ENCODE measurements at regions of chr15 and their contacts with region 1.

Region 1: GRCh38 chr15:63504247-63504978 is at the start of gene USP3:
- DNase-seq: peak; percentile 98
- H3K4me3 Mint-ChIP-seq: peak within 1 kb of the TSS; percentile 97
- H3K27ac Mint-ChIP-seq: peak within 1 kb of the TSS; percentile 97
- H3K4me1 Mint-ChIP-seq: peaks cover 71% of the 10 kb centered on the region
- H3K27me3 Mint-ChIP-seq: no peaks in the 10 kb centered on the region
- total RNA-seq, gene USP3: 46.7 and 49.2 TPM in 2 replicates

Region 2: DNA sequence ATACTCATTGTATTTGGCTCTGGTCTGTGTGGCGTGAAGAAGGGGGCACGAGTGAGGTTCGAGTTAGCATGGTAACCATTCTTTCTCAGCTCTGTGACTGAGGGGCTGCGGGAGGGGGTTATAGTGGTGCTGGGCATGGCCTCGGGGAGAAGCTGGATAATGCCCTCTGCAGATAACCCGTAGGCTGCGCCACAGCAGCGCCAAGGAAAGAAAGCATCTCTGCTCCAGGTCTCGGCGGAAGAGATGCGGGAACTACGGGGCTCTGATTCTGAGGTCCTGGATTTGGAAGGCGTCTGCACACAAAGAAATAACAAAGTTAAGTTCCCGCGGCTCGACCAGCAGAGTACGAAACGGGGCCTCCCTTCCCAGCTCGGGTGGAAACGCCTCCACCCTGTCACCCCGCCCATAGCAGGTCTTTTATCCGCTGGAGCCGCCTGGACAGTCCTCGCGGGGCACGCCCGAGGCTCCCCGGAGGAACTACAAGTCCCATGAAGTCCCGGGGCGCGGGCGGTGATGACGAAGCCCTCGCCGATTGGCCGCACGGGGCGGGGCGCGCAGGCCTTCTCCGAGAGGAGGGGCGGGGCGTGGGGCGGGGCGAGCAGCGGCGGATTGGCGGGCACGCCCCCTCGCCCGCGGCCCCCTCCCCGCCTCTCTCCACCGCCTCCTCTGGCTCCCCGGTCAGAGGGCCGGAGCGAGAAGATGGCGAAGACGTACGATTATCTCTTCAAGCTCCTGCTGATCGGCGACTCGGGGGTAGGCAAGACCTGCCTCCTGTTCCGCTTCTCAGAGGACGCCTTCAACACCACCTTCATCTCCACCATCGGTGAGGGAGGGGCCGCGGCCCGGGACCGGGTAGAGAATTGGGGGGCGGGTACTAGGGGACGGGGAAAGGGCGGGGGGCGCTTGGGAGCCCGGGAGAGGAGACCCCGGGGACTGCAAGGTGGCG is 315.2 kb before region 1 on chr15 and contains the start of gene RAB8B:
- intact Hi-C with region 1: loop called (anchors 5 kb)
- DNase-seq: peak; percentile 99
- H3K4me3 Mint-ChIP-seq: peak within 1 kb of the TSS; percentile 92
- H3K27ac Mint-ChIP-seq: peak within 1 kb of the TSS; percentile 92
- H3K4me1 Mint-ChIP-seq: peaks cover 39% of the 10 kb centered on the region
- H3K27me3 Mint-ChIP-seq: peaks cover 6% of the 10 kb centered on the region
- total RNA-seq, gene RAB8B: 186 and 187 TPM in 2 replicates

Region 3: GRCh38 chr15:63436872-63437375 is 67.5 kb before region 1 on chr15:
- intact Hi-C with region 1: no loop called
- DNase-seq: peak; percentile 92
- H3K4me3 Mint-ChIP-seq: peak overlapping the region; percentile 49
- H3K27ac Mint-ChIP-seq: peak overlapping the region; percentile 79
- H3K4me1 Mint-ChIP-seq: peaks cover 25% of the 10 kb centered on the region
- H3K27me3 Mint-ChIP-seq: no peaks in the 10 kb centered on the region

Region 4: DNA sequence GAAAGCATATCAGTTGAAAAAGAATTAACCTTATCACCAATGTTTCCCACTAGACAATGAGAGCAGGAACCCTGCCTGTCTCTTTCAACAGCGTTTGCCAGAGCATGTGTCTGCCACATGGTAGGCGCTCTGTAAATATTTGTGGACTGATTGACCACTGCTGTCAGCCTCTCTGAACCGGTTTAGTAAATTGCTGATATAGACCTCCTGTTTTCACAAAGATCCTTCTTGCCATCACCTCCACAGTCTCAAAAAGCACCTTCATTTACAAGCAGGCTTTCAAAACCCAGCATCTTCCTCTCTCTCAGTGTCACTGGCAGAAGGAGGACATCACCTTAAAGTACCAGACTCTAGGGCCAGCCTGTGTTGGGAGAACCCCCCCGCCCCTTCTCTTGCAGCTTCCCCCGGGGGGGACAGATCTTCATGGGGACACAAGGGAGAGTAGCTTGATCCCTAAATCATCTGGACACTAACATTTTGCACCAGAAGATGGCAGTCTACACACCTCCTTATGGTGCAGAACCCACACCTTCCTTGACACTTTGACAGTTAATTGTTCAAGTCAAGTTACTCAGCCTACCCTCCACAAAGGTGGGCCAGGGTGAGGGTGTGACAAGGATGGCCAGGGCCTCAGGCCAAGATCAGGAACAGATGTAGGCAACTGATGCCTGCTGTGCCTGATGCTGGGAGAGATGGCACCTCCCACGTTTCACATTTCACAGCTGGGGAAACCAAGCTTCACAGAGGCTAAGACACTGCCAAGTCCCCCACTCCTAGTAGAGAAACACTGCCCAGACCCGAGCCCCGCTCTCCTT is 37.8 kb before region 1 on chr15:
- intact Hi-C with region 1: loop called (anchors 2 kb)
- DNase-seq: peak; percentile 91
- H3K4me3 Mint-ChIP-seq: no peak overlapping the region
- H3K27ac Mint-ChIP-seq: no peak overlapping the region
- H3K4me1 Mint-ChIP-seq: peaks cover 23% of the 10 kb centered on the region
- H3K27me3 Mint-ChIP-seq: peaks cover 13% of the 10 kb centered on the region

Region 5: DNA sequence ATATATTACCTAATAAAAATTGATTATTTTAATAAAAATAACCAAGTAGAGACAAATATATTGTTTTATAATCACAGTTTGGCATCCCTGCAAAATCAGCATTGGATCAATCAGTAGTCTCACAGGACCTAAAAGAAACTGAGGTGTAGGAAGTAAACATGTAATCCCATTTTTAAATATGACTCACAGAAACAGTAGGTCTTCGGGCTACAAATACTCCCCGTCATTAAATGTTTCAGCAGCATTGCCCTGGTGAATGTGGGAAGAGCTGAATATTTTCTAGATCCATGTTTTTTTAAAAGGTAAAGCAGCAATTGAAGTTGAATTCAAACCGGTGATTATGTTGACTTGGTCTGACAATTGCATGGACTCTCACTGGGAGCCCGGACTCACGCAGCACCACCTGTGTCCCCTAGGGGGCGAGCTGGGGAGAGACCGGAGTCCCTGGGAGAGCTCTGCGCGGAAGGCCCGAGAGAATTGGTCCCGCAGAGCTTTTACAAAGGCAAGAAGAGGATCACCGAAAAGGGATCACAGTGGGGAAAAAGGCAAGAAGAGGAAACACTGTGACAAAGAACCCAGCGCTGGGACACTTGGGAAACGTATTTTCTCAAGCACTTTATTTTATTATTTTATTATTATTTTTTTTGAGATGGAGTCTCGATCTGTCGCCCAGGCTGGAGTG is 17.2 kb before region 1 on chr15:
- intact Hi-C with region 1: loop called (anchors 1 kb)
- DNase-seq: peak; percentile 97
- H3K4me3 Mint-ChIP-seq: peak overlapping the region; percentile 63
- H3K27ac Mint-ChIP-seq: peak overlapping the region; percentile 80
- H3K4me1 Mint-ChIP-seq: peaks cover 47% of the 10 kb centered on the region
- H3K27me3 Mint-ChIP-seq: no peaks in the 10 kb centered on the region

Region 6: GRCh38 chr15:63545520-63545919 is 41.1 kb after region 1 on chr15:
- intact Hi-C with region 1: no loop called
- DNase-seq: no peak
- H3K4me3 Mint-ChIP-seq: no peak overlapping the region
- H3K27ac Mint-ChIP-seq: no peak overlapping the region
- H3K4me1 Mint-ChIP-seq: peaks cover 14% of the 10 kb centered on the region
- H3K27me3 Mint-ChIP-seq: no peaks in the 10 kb centered on the region

Region 7: DNA sequence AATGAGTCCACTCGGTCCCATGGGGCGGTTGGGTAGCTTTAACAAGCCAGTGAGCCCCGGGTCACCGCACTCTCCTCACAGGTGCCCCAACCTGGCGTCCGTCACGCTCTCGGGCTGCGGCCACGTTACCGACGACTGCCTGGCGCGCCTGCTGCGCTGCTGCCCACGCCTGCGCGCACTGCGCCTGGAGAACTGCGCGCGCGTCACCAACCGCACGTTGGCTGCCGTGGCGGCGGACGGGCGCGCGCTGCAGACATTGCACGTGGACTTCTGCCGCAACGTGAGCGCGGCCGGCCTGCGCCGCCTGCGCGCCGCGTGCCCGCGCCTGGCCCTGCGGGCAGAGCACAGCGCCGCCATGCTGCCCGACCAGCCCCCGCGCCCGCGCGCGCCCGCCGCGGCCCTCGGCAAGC is 96.2 kb after region 1 on chr15:
- intact Hi-C with region 1: loop called (anchors 1 kb)
- DNase-seq: peak; percentile 97
- H3K4me3 Mint-ChIP-seq: peak overlapping the region; percentile 93
- H3K27ac Mint-ChIP-seq: peak overlapping the region; percentile 91
- H3K4me1 Mint-ChIP-seq: peaks cover 49% of the 10 kb centered on the region
- H3K27me3 Mint-ChIP-seq: no peaks in the 10 kb centered on the region

Region 8: GRCh38 chr15:63752075-63752684 is 247.8 kb after region 1 on chr15:
- intact Hi-C with region 1: no loop called
- DNase-seq: peak; percentile 85
- H3K4me3 Mint-ChIP-seq: no peak overlapping the region
- H3K27ac Mint-ChIP-seq: peak overlapping the region; percentile 44
- H3K4me1 Mint-ChIP-seq: peaks cover 8% of the 10 kb centered on the region
- H3K27me3 Mint-ChIP-seq: no peaks in the 10 kb centered on the region

Region 9: GRCh38 chr15:64836023-64836536 is 1331.7 kb after region 1 on chr15:
- intact Hi-C with region 1: loop called (anchors 5 kb)
- DNase-seq: peak; percentile 64
- H3K4me3 Mint-ChIP-seq: peak overlapping the region; percentile 60
- H3K27ac Mint-ChIP-seq: peak overlapping the region; percentile 62
- H3K4me1 Mint-ChIP-seq: peaks cover 39% of the 10 kb centered on the region
- H3K27me3 Mint-ChIP-seq: no peaks in the 10 kb centered on the region

Measured in activated CD4-positive, alpha-beta T cell treated with anti-CD3 and anti-CD28 coated beads, Interleukin-2, amount 10 ng/mL, durations not matched to agents 24 days and 14 days (primary cell).